Activated naive CD4-positive, alpha-beta T cell treated with anti-CD3 and anti-CD28 coated beads for 36 hours (primary cell): ENCODE measurements at regions of chr5 and their contacts with region 1.

Region 1: GRCh38 chr5:56095579-56096102 is 100.9 kb upstream of the IL6ST start:
- DNase-seq: no peak
- H3K4me3 Mint-ChIP-seq: peak overlapping the region; percentile 55
- H3K27ac Mint-ChIP-seq: peak overlapping the region; percentile 97
- H3K4me1 Mint-ChIP-seq: peaks cover 92% of the 10 kb centered on the region
- H3K27me3 Mint-ChIP-seq: no peaks in the 10 kb centered on the region

Region 2: GRCh38 chr5:55982957-55983381 is 112.7 kb before region 1 on chr5:
- CTCF ChIA-PET with region 1: interaction called, 9 read pairs
- intact Hi-C with region 1: loop called (anchors 1 kb)
- DNase-seq: peak; percentile 53
- H3K4me3 Mint-ChIP-seq: peak overlapping the region; percentile 61
- H3K27ac Mint-ChIP-seq: peak overlapping the region; percentile 87
- H3K4me1 Mint-ChIP-seq: peaks cover 82% of the 10 kb centered on the region
- H3K27me3 Mint-ChIP-seq: no peaks in the 10 kb centered on the region

Region 3: DNA sequence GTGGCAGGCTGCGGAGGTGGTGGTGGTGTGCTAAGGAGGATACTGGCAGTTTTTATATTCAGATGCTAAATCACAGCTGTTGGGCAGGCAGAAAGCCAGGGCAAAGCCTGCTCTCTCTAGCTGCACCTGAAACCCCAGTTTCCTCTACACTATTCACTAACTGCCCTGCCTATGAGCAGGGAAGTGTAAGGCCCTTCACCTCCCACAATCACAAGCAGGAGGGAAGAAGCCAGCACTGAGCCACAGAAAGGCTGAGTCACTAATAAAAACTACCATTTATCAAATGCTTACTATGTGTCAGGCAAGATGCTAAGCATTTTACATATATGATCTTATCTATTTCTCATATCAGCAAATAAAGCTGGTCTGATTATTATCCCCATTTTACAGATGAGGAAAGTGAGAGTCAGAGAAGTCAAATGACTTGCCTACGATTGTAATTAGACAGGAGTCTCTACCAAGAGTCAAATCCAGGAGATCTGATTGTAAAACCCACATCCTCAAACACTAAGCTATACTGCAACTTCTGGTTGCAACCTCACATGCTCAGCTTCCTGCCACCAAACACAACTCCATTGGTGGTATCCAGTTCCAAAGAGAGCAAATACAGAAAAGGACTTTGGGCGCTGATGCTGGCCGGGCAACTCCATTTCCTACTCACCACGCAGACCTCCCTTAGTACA is 83.2 kb before region 1 on chr5:
- CTCF ChIA-PET with region 1: no interaction called
- intact Hi-C with region 1: loop called (anchors 1 kb)
- DNase-seq: peak; percentile 66
- H3K4me3 Mint-ChIP-seq: peak overlapping the region; percentile 33
- H3K27ac Mint-ChIP-seq: peak overlapping the region; percentile 77
- H3K4me1 Mint-ChIP-seq: peaks cover 41% of the 10 kb centered on the region
- H3K27me3 Mint-ChIP-seq: no peaks in the 10 kb centered on the region

Region 4: DNA sequence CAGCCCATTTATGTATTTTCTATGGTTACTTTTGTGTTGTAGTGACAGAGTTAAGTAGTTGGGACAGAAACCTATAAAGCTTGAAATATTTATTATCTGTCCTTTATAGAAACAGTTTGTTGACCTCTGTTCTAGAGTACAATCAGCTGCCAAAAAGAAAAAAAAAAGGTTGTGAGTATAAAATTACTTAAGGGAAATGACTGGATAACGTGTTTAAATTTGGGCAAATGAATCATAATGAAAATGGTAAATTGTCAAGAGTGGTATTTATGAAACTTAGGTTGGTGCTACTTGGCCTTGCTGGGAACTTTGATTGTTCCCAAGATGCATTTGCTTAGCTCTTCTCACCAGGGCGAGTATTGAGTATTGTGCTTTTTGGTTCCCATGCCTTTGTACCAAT is 30.7 kb before region 1 on chr5:
- CTCF ChIA-PET with region 1: interaction called, 3 read pairs
- intact Hi-C with region 1: loop called (anchors 1 kb)
- DNase-seq: peak; percentile 52
- H3K4me3 Mint-ChIP-seq: peak overlapping the region; percentile 10
- H3K27ac Mint-ChIP-seq: peak overlapping the region; percentile 70
- H3K4me1 Mint-ChIP-seq: peaks cover 75% of the 10 kb centered on the region
- H3K27me3 Mint-ChIP-seq: no peaks in the 10 kb centered on the region

Region 5: DNA sequence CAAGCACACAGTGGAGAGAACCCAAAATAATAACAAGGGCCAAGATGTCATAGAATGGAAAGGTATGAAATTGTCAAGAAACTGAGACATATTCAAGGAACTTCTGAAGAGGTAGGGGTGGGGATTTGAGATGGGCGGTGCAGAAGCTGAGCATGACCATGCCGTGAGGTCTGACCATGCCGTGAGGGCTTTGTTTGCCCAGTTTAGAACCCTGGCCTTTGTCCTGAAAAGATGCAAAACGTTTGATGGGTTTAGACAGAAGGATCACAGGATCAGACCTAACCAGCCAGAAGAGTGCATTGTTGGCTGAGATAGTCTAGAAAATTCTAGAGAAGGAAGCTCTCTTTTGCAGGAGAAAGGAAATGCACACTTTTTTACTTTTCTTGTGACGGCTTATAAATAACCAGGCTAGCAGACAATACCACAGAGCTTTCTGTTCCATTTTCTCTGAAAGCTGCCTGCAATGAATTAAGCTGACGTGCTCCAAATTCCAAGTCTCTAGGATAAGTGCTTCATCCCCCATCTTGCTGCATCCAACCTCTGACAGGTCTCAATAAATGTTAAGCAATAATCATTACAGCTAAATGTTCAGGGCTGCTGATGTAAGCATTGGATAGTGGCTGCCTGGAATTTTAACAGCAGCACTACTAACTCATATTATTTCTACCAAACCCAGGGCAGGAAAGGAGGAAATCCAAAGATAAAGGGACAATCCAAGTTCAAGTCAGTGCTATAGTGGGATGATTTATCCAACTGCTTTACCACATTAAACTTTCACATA is 10.1 kb after region 1 on chr5:
- CTCF ChIA-PET with region 1: interaction called, 23 read pairs
- intact Hi-C with region 1: loop called (anchors 1 kb)
- DNase-seq: no peak
- H3K4me3 Mint-ChIP-seq: peak overlapping the region; percentile 58
- H3K27ac Mint-ChIP-seq: peak overlapping the region; percentile 91
- H3K4me1 Mint-ChIP-seq: peaks cover 76% of the 10 kb centered on the region
- H3K27me3 Mint-ChIP-seq: no peaks in the 10 kb centered on the region

Region 6: GRCh38 chr5:56148453-56148971 is 52.9 kb after region 1 on chr5:
- CTCF ChIA-PET with region 1: interaction called, 5 read pairs
- intact Hi-C with region 1: loop called (anchors 1 kb)
- DNase-seq: peak; percentile 80
- H3K4me3 Mint-ChIP-seq: peak overlapping the region; percentile 53
- H3K27ac Mint-ChIP-seq: peak overlapping the region; percentile 93
- H3K4me1 Mint-ChIP-seq: peaks cover 68% of the 10 kb centered on the region
- H3K27me3 Mint-ChIP-seq: no peaks in the 10 kb centered on the region

Region 7: GRCh38 chr5:56172225-56172624 is 76.6 kb after region 1 on chr5:
- CTCF ChIA-PET with region 1: no interaction called
- intact Hi-C with region 1: loop called (anchors 1 kb)
- DNase-seq: no peak
- H3K4me3 Mint-ChIP-seq: peak overlapping the region; percentile 1
- H3K27ac Mint-ChIP-seq: peak overlapping the region; percentile 76
- H3K4me1 Mint-ChIP-seq: peaks cover 69% of the 10 kb centered on the region
- H3K27me3 Mint-ChIP-seq: no peaks in the 10 kb centered on the region

Region 8: GRCh38 chr5:56601641-56602071 is 506.0 kb after region 1 on chr5:
- CTCF ChIA-PET with region 1: no interaction called
- intact Hi-C with region 1: no loop called
- DNase-seq: no peak
- H3K4me3 Mint-ChIP-seq: no peak overlapping the region
- H3K27ac Mint-ChIP-seq: no peak overlapping the region
- H3K4me1 Mint-ChIP-seq: peaks cover 17% of the 10 kb centered on the region
- H3K27me3 Mint-ChIP-seq: no peaks in the 10 kb centered on the region

Region 9: DNA sequence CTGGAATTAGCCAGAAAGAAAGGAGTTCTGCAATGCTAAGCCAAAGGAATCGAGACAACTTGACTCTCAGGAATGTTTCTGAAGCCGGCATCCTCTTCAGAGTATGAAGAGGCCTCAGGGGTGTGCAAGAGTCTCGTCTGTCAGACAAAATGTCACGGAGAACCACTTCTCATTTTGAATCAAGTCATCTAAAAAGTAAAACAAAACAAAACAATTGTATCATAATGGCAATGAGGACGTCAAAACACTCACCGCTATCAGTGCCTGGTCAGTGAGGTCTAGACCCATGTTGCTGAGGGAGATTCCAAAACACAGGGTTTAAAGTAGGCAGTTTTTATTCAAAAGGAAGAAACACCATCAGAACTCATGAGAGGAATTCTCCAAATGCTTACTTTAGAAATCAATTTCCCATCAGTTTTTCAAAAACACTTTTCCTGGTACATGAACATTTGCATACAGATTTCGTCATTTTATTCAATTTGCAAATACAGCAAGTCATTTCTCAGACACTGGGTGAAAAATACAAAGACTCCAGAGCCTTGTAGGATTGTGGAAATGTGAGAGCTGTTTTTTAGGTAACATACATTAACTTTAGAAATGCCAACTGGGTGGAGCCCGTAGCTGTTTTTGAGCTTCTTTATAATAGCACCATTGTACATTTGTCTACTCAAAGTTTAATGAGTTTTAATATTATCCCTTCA is 630.2 kb after region 1 on chr5:
- CTCF ChIA-PET with region 1: no interaction called
- intact Hi-C with region 1: no loop called
- DNase-seq: no peak
- H3K4me3 Mint-ChIP-seq: no peak overlapping the region
- H3K27ac Mint-ChIP-seq: no peak overlapping the region
- H3K4me1 Mint-ChIP-seq: peaks cover 3% of the 10 kb centered on the region
- H3K27me3 Mint-ChIP-seq: no peaks in the 10 kb centered on the region